Common myeloid progenitor, CD34-positive (primary cell): ENCODE measurements at regions of chr13 and their contacts with region 1.

Region 1: GRCh38 chr13:91154558-91155353 is 192.7 kb upstream of the MIR17HG start:
- DNase-seq: peak; percentile 31 to 89 (median 84)
- H3K4me3 ChIP-seq: no peak overlapping the region
- H3K27ac ChIP-seq: peak overlapping the region in 1 of 2 experiments; percentile 39
- H3K4me1 ChIP-seq: peaks cover 4 to 35% (median 13%) of the 10 kb centered on the region in 4 experiments
- H3K27me3 ChIP-seq: no peaks in the 10 kb centered on the region

Region 2: DNA sequence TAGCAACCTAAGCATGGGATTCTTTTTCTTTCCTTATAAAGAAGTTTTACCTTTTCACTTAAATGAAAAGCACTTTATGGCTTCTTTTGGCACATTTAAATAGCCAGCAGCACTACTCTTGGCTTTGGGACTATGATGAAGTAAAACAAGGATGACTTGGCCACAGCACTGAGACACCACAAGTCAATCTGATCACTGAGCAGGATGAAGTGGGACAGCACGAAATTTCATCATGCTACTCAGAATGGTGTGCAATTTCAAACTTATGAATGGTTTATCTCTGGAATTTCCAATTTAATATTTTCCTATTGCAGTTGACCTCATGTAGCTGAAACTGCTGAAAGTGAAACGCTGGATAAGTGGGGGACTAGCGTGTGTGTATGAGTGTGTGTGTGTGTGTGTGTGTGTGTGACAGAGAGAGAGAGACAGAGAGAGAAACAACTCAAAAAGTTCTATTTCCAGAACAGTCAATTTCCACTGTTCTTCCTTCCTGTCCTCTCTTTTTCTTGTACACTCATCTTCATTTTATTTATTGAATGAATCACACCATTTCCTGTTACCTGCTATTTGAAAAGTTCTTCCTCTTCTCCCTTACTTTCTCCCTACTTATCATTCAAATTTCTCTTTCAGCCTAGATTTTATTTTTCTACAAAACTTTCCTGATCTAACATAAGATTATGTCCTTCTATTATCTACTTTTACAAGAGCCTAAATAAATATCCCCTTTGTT is 221.5 kb before region 1 on chr13:
- CTCF ChIA-PET with region 1: no interaction called
- POLR2A ChIA-PET with region 1: no interaction called
- DNase-seq: no peak
- H3K4me3 ChIP-seq: no peak overlapping the region
- H3K27ac ChIP-seq: no peak overlapping the region
- H3K4me1 ChIP-seq: no peaks in the 10 kb centered on the region
- H3K27me3 ChIP-seq: no peaks in the 10 kb centered on the region

Region 3: GRCh38 chr13:91078093-91078679 is 76.6 kb before region 1 on chr13:
- CTCF ChIA-PET with region 1: interaction called, 13 read pairs
- POLR2A ChIA-PET with region 1: no interaction called
- DNase-seq: peak; percentile 47 to 72 (median 62)
- H3K4me3 ChIP-seq: no peak overlapping the region
- H3K27ac ChIP-seq: no peak overlapping the region
- H3K4me1 ChIP-seq: no peaks in the 10 kb centered on the region
- H3K27me3 ChIP-seq: no peaks in the 10 kb centered on the region

Region 4: DNA sequence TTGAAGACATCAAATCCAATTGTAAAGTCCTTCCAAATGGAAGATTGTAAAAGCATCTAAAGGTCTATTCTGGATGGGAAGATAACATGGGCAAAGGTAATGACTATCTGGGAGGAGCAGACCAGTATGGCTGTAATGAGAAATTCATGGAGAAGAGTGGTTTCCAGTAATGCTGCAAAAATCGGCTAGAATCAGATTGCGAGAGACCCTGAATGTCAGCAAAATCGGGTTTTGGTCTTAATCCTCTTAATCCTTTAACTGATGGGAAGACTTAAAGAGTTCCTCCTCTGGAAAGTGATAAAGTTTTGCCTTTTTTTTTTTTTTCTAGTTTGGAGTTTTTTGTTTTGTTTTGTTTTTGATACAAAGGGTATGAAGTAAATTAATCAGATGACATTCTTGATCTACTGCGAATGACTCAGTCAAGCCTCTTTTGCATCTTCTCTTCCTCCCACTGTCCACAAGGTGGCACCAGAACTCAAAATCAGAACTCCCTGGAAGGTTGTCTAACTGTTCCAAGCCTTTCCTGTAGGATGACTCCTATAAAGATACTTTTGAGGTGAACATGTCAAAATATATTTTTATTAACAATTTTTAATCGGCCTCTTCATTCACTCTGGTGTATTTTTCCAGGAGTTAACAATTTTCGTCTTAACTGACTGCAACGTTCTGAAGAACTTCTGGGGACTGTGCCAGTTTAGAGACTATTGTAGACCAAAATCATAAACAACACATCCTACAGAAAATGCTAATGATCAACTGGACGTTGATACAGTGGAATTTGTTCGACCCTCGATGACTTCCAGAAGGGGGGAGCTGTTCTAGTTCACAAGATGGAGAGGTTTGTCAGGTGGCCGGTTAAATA is 20.6 kb before region 1 on chr13:
- CTCF ChIA-PET with region 1: interaction called, 33 read pairs
- POLR2A ChIA-PET with region 1: no interaction called
- DNase-seq: peak; percentile 65 to 67 (median 67)
- H3K4me3 ChIP-seq: peak overlapping the region in 4 of 7 experiments; percentile 30 to 74 (median 65)
- H3K27ac ChIP-seq: peak overlapping the region in 1 of 2 experiments; percentile 7
- H3K4me1 ChIP-seq: peaks cover 6 to 32% (median 10%) of the 10 kb centered on the region in 4 experiments
- H3K27me3 ChIP-seq: no peaks in the 10 kb centered on the region

Region 5: DNA sequence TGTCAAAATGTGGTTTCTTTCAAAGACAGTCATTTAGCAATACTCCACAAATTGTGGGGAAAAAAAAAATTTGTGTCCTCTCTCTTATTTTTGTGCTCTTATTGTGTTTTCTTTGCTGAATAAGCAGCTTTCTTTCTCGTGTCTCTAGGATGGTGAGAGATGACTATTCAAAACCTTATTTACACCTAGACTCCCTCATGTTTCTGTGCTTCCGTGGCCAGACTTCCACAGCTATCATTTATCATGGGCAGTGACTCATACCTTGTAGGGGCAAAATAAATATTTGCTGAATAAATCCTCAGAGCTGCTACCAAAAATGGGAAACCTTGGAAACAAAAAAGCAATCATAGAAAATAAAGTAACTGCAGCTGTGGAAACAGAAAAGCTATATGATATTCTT is 12.2 kb before region 1 on chr13:
- CTCF ChIA-PET with region 1: interaction called, 81 read pairs
- POLR2A ChIA-PET with region 1: no interaction called
- DNase-seq: peak in 2 of 3 donors; percentile 72 to 80
- H3K4me3 ChIP-seq: no peak overlapping the region
- H3K27ac ChIP-seq: no peak overlapping the region
- H3K4me1 ChIP-seq: peaks cover 8 to 19% (median 13%) of the 10 kb centered on the region in 4 experiments
- H3K27me3 ChIP-seq: no peaks in the 10 kb centered on the region

Region 6: DNA sequence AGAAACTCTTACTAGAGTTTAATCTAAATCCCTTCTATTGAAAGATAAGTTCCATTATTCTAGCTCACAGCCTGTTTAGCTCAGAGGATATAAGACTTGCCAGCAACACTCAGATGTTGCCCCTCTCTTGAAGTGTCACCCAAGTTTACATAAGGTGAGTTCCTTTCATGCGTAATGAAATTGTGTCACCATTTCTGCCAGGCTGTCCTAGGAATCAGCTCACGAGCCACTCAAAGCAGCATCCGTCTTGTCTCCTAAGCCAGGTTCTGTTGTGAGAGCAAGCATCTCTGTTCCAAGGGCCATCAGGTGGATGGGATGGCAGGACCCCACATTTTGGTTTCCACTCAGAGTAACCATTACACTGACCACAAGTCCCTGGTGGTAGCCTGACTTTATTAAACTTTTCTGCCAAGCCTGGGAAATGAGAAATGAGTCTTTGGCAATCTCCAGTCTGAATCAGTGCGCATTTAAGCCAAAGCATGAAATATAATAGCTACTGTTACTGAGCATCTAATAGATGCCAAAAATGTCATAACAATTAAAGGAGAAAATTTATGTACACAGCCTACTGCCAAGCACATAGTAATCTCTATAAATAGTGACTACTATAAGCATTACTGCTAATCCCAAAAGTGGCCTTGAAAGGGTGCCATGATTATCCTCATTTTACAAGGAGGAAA is 13.1 kb after region 1 on chr13:
- CTCF ChIA-PET with region 1: interaction called, 21 read pairs
- POLR2A ChIA-PET with region 1: no interaction called
- DNase-seq: no peak
- H3K4me3 ChIP-seq: no peak overlapping the region
- H3K27ac ChIP-seq: no peak overlapping the region
- H3K4me1 ChIP-seq: peaks cover 0 to 13% (median 3%) of the 10 kb centered on the region in 4 experiments
- H3K27me3 ChIP-seq: no peaks in the 10 kb centered on the region